CD8-positive, alpha-beta T cell (primary cell): ENCODE measurements at regions of chr12 and their contacts with region 1.

Region 1: DNA sequence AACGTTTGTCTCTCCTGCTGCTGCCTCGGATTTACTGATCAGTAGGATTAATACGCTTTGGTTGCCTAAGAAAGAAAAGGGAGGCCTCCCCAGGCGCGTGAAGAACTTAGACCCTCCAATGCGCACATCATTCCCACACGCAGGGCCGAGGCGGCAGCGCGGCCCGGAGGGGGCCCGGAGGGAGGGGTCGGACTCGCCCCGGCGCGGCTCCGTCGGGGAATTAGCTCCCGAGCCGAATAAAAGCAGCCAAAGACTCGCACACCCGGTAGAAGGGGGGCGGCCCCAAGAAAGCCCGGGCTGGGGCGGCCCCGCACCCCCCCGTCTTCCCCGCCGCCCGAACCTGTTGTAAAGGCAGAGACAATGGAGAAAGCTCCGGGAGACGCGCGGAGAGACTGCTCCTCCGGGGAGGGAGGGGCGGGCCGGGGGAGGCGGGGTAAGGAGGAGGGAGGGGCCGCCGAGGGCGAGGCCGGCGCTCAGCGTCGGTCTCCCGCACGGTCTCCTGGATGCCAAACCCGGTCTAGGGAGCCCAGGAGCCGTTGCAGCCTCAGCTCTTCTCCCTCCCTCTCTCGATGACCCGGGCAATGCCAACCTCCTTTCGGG is at the start of gene NELL2:
- DNase-seq: peak; percentile 46 to 84 (median 74)
- ATAC-seq: peak; percentile 75
- H3K4me3 ChIP-seq: peak within 1 kb of the TSS; percentile 69 to 77
- H3K4me3 Mint-ChIP-seq: peak within 1 kb of the TSS; percentile 98
- H3K27ac ChIP-seq: peak within 1 kb of the TSS; percentile 33 to 59
- H3K27ac Mint-ChIP-seq: peak within 1 kb of the TSS; percentile 92
- H3K4me1 ChIP-seq: peaks cover 14% of the 10 kb centered on the region
- H3K4me1 Mint-ChIP-seq: peaks cover 27% of the 10 kb centered on the region
- H3K27me3 ChIP-seq: peaks cover 0 to 6% of the 10 kb centered on the region in 2 experiments
- H3K27me3 Mint-ChIP-seq: peaks cover 2% of the 10 kb centered on the region
- CTCF ChIP-seq: no peak
- total RNA-seq, gene NELL2: 384 to 390 TPM

Region 2: GRCh38 chr12:44780221-44780790 is 95.7 kb before region 1 on chr12:
- CTCF ChIA-PET with region 1: interaction called, 116 read pairs
- POLR2A ChIA-PET with region 1: interaction called, 6 read pairs
- intact Hi-C with region 1: loop called in 1 of 2 experiments (anchors 1 kb)
- DNase-seq: no peak
- ATAC-seq: no peak
- H3K4me3 ChIP-seq: no peak overlapping the region
- H3K4me3 Mint-ChIP-seq: no peak overlapping the region
- H3K27ac ChIP-seq: no peak overlapping the region
- H3K27ac Mint-ChIP-seq: peak overlapping the region; percentile 66
- H3K4me1 ChIP-seq: peaks cover 4% of the 10 kb centered on the region
- H3K4me1 Mint-ChIP-seq: peaks cover 33% of the 10 kb centered on the region
- H3K27me3 ChIP-seq: no peaks in the 10 kb centered on the region
- H3K27me3 Mint-ChIP-seq: no peaks in the 10 kb centered on the region
- CTCF ChIP-seq: no peak

Region 3: DNA sequence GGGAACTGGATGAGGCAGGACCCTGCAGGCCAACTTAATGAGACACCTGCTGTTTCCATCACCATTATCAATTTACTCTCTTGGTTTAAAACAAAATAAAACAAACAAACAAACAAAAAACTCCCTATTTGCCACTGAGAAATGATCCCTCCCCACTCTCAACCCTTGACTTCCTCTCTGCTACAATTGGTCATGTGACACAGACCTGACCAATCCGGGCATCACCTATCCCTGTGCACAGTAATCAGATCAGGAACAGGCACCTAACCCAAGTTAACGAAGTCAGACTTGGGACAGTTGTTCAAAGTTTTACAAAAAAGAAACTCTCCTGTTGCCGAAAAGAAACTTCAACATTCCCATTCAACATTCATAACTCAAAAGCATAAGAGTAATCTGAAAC is 58.4 kb before region 1 on chr12:
- CTCF ChIA-PET with region 1: interaction called, 151 read pairs
- POLR2A ChIA-PET with region 1: interaction called, 41 read pairs
- intact Hi-C with region 1: loop called (anchors 1 kb)
- DNase-seq: peak in 1 of 9 experiments; percentile 42
- ATAC-seq: no peak
- H3K4me3 ChIP-seq: no peak overlapping the region
- H3K4me3 Mint-ChIP-seq: no peak overlapping the region
- H3K27ac ChIP-seq: peak overlapping the region in 1 of 2 experiments; percentile 2
- H3K27ac Mint-ChIP-seq: peak overlapping the region; percentile 80
- H3K4me1 ChIP-seq: peaks cover 79% of the 10 kb centered on the region
- H3K4me1 Mint-ChIP-seq: peaks cover 77% of the 10 kb centered on the region
- H3K27me3 ChIP-seq: no peaks in the 10 kb centered on the region
- H3K27me3 Mint-ChIP-seq: no peaks in the 10 kb centered on the region
- CTCF ChIP-seq: no peak

Region 4: DNA sequence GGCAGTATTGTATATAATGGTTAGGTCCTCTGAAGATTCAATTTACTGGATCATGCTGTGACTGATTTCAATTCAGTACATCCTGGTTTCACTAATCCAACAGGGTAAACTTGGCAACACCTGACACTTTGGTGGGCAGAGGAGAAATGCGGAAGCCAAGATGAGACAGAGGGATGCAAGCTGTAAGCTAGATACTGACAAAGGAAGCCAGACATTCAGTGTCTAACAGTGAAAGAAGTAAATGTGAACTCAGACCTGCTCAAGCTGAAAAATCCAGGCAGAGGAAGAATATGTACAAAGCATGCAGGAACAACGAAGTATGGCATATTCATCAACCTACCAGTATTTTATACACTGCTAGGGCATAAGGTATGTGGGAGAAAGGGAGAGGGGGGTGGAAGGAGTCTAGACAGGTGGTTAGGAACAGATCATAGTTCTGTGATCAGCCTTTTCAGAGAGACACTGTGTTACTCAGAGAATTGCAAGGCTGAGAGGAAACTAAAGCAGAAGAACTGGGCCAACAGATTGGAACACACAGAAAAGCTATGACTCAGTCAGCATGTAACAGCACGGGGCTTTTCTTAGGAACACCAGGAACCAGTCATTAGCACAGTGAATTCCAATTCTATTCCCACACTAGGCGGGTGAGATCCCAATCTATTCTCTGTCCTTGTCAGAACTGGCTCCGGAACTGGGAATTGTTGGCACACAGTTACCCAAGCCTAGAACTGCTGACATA is 40.2 kb before region 1 on chr12:
- CTCF ChIA-PET with region 1: interaction called, 12 read pairs
- POLR2A ChIA-PET with region 1: interaction called, 8 read pairs
- intact Hi-C with region 1: loop called in 1 of 2 experiments (anchors 5 kb)
- DNase-seq: peak in 4 of 9 experiments; percentile 31 to 62 (median 39)
- ATAC-seq: peak; percentile 87
- H3K4me3 ChIP-seq: peak overlapping the region; percentile 12 to 20
- H3K4me3 Mint-ChIP-seq: peak overlapping the region; percentile 73
- H3K27ac ChIP-seq: peak overlapping the region; percentile 42 to 57
- H3K27ac Mint-ChIP-seq: peak overlapping the region; percentile 94
- H3K4me1 ChIP-seq: peaks cover 90% of the 10 kb centered on the region
- H3K4me1 Mint-ChIP-seq: peaks cover 93% of the 10 kb centered on the region
- H3K27me3 ChIP-seq: no peaks in the 10 kb centered on the region
- H3K27me3 Mint-ChIP-seq: no peaks in the 10 kb centered on the region
- CTCF ChIP-seq: no peak

Region 5: GRCh38 chr12:44847888-44848702 is 28.0 kb before region 1 on chr12:
- CTCF ChIA-PET with region 1: interaction called, 29 read pairs
- POLR2A ChIA-PET with region 1: interaction called, 28 read pairs
- intact Hi-C with region 1: loop called in 1 of 2 experiments (anchors 1 kb)
- DNase-seq: peak; percentile 34 to 94 (median 69)
- ATAC-seq: peak; percentile 83
- H3K4me3 ChIP-seq: peak overlapping the region; percentile 14 to 39
- H3K4me3 Mint-ChIP-seq: peak overlapping the region; percentile 64
- H3K27ac ChIP-seq: peak overlapping the region; percentile 81 to 85
- H3K27ac Mint-ChIP-seq: peak overlapping the region; percentile 99
- H3K4me1 ChIP-seq: peaks cover 93% of the 10 kb centered on the region
- H3K4me1 Mint-ChIP-seq: peaks cover 88% of the 10 kb centered on the region
- H3K27me3 ChIP-seq: no peaks in the 10 kb centered on the region
- H3K27me3 Mint-ChIP-seq: no peaks in the 10 kb centered on the region
- CTCF ChIP-seq: no peak

Region 6: DNA sequence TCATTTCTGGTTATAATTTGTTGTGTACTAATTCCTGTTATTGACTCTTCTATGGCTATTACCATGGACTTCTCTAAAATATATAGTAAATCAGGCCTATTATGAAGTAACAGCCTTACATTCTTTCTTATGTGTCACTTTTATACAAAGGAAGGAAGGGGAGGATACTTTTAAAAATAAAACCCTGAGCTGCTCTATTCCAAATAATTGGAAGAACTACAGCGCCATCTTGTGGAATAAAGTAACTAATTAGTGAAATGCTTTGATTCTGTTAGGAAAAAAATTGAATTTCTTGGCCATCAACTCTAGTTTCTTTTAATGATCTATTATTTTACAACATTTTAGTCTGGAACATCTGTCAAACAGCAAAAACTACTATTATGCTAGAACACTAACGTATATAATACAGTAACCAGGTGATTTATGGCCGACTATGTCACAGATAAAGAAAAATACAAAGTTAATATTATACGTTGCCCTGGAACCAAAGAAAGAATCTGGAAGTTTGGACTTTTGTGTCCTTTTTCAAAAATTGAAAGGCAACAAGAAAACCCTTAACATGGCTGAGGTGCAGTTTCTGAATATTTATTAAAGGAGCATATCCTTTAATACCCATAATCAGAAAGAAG is 55.0 kb after region 1 on chr12:
- CTCF ChIA-PET with region 1: interaction called, 18 read pairs
- POLR2A ChIA-PET with region 1: interaction called, 5 read pairs
- intact Hi-C with region 1: loop called (anchors 2 kb)
- DNase-seq: peak in 3 of 9 experiments; percentile 11 to 76 (median 63)
- ATAC-seq: peak; percentile 58
- H3K4me3 ChIP-seq: no peak overlapping the region
- H3K4me3 Mint-ChIP-seq: no peak overlapping the region
- H3K27ac ChIP-seq: no peak overlapping the region
- H3K27ac Mint-ChIP-seq: no peak overlapping the region
- H3K4me1 ChIP-seq: peaks cover 5% of the 10 kb centered on the region
- H3K4me1 Mint-ChIP-seq: peaks cover 10% of the 10 kb centered on the region
- H3K27me3 ChIP-seq: no peaks in the 10 kb centered on the region
- H3K27me3 Mint-ChIP-seq: no peaks in the 10 kb centered on the region
- CTCF ChIP-seq: peak; percentile 80